T-cell (primary cell): ENCODE measurements at regions of chr5 and their contacts with region 1.

Region 1: DNA sequence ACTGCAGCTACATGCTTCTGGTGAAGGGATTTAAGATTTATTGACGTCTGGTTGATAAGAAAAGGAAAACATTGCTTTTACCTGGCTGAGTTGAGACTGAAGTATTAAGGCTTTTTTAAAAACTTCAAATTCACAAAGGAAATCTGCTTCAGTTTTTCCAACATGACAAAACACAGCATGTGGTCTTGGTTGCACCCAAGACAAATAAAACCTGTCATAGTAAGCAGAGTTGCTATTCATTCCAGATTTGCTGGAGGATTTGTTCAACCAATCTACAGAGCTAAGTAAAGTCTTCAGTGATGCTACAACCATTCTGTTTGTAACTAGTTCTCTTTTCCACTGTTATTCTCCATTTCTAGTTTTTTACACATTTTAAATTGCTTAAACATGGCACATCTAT is 11.3 kb downstream of the C5orf63 start:
- DNase-seq: no peak
- ATAC-seq: no peak
- H3K4me3 ChIP-seq: no peak overlapping the region
- H3K4me3 Mint-ChIP-seq: no peak overlapping the region
- H3K27ac ChIP-seq: no peak overlapping the region
- H3K27ac Mint-ChIP-seq: no peak overlapping the region
- H3K4me1 ChIP-seq: no peaks in the 10 kb centered on the region
- H3K4me1 Mint-ChIP-seq: peaks cover 6 to 11% (median 9%) of the 10 kb centered on the region in 3 donors
- H3K27me3 ChIP-seq: no peaks in the 10 kb centered on the region
- H3K27me3 Mint-ChIP-seq: no peaks in the 10 kb centered on the region

Region 2: GRCh38 chr5:126846344-126846743 is 215.6 kb before region 1 on chr5:
- CTCF ChIA-PET with region 1: no interaction called
- POLR2A ChIA-PET with region 1: interaction called in 1 of 2 experiments, 13 read pairs
- DNase-seq: no peak
- ATAC-seq: no peak
- H3K4me3 ChIP-seq: no peak overlapping the region
- H3K4me3 Mint-ChIP-seq: peak overlapping the region in 1 of 3 donors; percentile 47
- H3K27ac ChIP-seq: peak overlapping the region; percentile 72
- H3K27ac Mint-ChIP-seq: peak overlapping the region; percentile 96
- H3K4me1 ChIP-seq: peaks cover 21 to 22% of the 10 kb centered on the region in 2 experiments
- H3K4me1 Mint-ChIP-seq: peaks cover 43 to 54% (median 54%) of the 10 kb centered on the region in 3 donors
- H3K27me3 ChIP-seq: no peaks in the 10 kb centered on the region
- H3K27me3 Mint-ChIP-seq: no peaks in the 10 kb centered on the region

Region 3: GRCh38 chr5:127136908-127137307 is 75.0 kb after region 1 on chr5:
- CTCF ChIA-PET with region 1: no interaction called
- POLR2A ChIA-PET with region 1: no interaction called
- DNase-seq: no peak
- ATAC-seq: no peak
- H3K4me3 ChIP-seq: no peak overlapping the region
- H3K4me3 Mint-ChIP-seq: no peak overlapping the region
- H3K27ac ChIP-seq: no peak overlapping the region
- H3K27ac Mint-ChIP-seq: no peak overlapping the region
- H3K4me1 ChIP-seq: no peaks in the 10 kb centered on the region
- H3K4me1 Mint-ChIP-seq: no peaks in the 10 kb centered on the region
- H3K27me3 ChIP-seq: no peaks in the 10 kb centered on the region
- H3K27me3 Mint-ChIP-seq: peaks cover 12 to 20% of the 10 kb centered on the region in 2 donors

Region 4: GRCh38 chr5:127536687-127537086 is 474.7 kb after region 1 on chr5:
- CTCF ChIA-PET with region 1: no interaction called
- POLR2A ChIA-PET with region 1: no interaction called
- DNase-seq: no peak
- ATAC-seq: no peak
- H3K4me3 ChIP-seq: no peak overlapping the region
- H3K4me3 Mint-ChIP-seq: no peak overlapping the region
- H3K27ac ChIP-seq: no peak overlapping the region
- H3K27ac Mint-ChIP-seq: no peak overlapping the region
- H3K4me1 ChIP-seq: no peaks in the 10 kb centered on the region
- H3K4me1 Mint-ChIP-seq: peaks cover 0 to 8% (median 7%) of the 10 kb centered on the region in 3 donors
- H3K27me3 ChIP-seq: no peaks in the 10 kb centered on the region
- H3K27me3 Mint-ChIP-seq: no peaks in the 10 kb centered on the region